ENCODE measurements at regions of chr1 and their contacts with region 1.

Region 1: DNA sequence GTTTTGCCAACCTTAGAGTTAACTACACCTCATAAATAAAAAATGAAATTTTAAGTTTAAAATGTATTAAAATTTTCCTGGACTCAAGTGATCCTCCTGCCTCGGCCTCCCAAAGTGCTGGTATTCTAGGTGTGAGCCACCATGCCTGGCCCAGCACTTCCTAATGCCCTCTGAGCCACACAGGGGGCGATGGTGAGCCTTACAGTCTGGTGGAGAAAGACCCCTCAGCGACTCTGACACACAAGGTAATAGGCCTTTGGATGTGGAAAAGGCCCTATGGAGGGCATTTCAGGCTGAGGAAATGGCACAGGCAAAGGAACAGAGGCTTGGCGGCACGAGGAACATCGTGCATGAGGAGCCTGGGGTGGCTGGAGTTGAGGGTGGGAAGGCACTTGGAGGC is 6.7 kb downstream of the CITED4 start:
- DNase-seq: no peak
- ATAC-seq: no peak
- H3K4me3 ChIP-seq: no peak overlapping the region
- H3K27ac ChIP-seq: no peak overlapping the region
- H3K4me1 ChIP-seq: peaks cover 21% of the 10 kb centered on the region
- H3K27me3 ChIP-seq: no peaks in the 10 kb centered on the region
- CTCF ChIP-seq: peak; percentile 72

Region 2: GRCh38 chr1:40896482-40896881 is 41.0 kb after region 1 on chr1:
- CTCF ChIA-PET with region 1: no interaction called
- POLR2A ChIA-PET with region 1: interaction called, 13 read pairs
- in situ Hi-C with region 1: no loop called
- intact Hi-C with region 1: no loop called
- DNase-seq: no peak
- ATAC-seq: no peak
- H3K4me3 ChIP-seq: no peak overlapping the region
- H3K27ac ChIP-seq: peak overlapping the region; percentile 75; the same call in 1 of the 2 replicates
- H3K4me1 ChIP-seq: peaks cover 19% of the 10 kb centered on the region
- H3K27me3 ChIP-seq: no peaks in the 10 kb centered on the region
- CTCF ChIP-seq: no peak

Region 3: GRCh38 chr1:40973912-40974311 is 118.4 kb after region 1 on chr1:
- CTCF ChIA-PET with region 1: interaction called, 20 read pairs
- POLR2A ChIA-PET with region 1: no interaction called
- in situ Hi-C with region 1: no loop called
- intact Hi-C with region 1: no loop called
- DNase-seq: no peak
- ATAC-seq: no peak
- H3K4me3 ChIP-seq: no peak overlapping the region
- H3K27ac ChIP-seq: peak overlapping the region; percentile 9; the same call in 1 of the 2 replicates
- H3K4me1 ChIP-seq: peaks cover 31% of the 10 kb centered on the region
- H3K27me3 ChIP-seq: no peaks in the 10 kb centered on the region
- CTCF ChIP-seq: no peak